Natural killer cell (primary cell): ENCODE measurements at regions of chr7 and their contacts with region 1.

Region 1: GRCh38 chr7:103148994-103149807 is at the start of gene NAPEPLD:
- DNase-seq: peak; percentile 69 to 86
- ATAC-seq: peak; percentile 87 to 93 (median 90)
- H3K4me3 ChIP-seq: peak within 1 kb of the TSS; percentile 99
- H3K4me3 Mint-ChIP-seq: peak within 1 kb of the TSS; percentile 93
- H3K27ac ChIP-seq: peak within 1 kb of the TSS; percentile 90
- H3K27ac Mint-ChIP-seq: peak within 1 kb of the TSS; percentile 85 to 94
- H3K4me1 ChIP-seq: peaks cover 12% of the 10 kb centered on the region
- H3K4me1 Mint-ChIP-seq: peaks cover 35 to 36% of the 10 kb centered on the region in 2 donors
- H3K27me3 ChIP-seq: no peaks in the 10 kb centered on the region
- H3K27me3 Mint-ChIP-seq: no peaks in the 10 kb centered on the region
- CTCF ChIP-seq: no peak
- total RNA-seq, gene NAPEPLD: 5.3 to 6.7 (median 5.9) TPM

Region 2: GRCh38 chr7:103025341-103025740 is 123.9 kb before region 1 on chr7:
- intact Hi-C with region 1: no loop called
- DNase-seq: no peak
- ATAC-seq: no peak
- H3K4me3 ChIP-seq: no peak overlapping the region
- H3K4me3 Mint-ChIP-seq: no peak overlapping the region
- H3K27ac ChIP-seq: no peak overlapping the region
- H3K27ac Mint-ChIP-seq: no peak overlapping the region
- H3K4me1 ChIP-seq: no peaks in the 10 kb centered on the region
- H3K4me1 Mint-ChIP-seq: no peaks in the 10 kb centered on the region
- H3K27me3 ChIP-seq: no peaks in the 10 kb centered on the region
- H3K27me3 Mint-ChIP-seq: peaks cover 0 to 7% of the 10 kb centered on the region in 2 donors
- CTCF ChIP-seq: no peak

Region 3: GRCh38 chr7:103074519-103075336 is 74.5 kb before region 1 on chr7 and contains the starts of genes ARMC10 and FBXL13:
- intact Hi-C with region 1: loop called (anchors 2 kb)
- DNase-seq: peak; percentile 83 to 95
- ATAC-seq: peak; percentile 83 to 92 (median 84)
- H3K4me3 ChIP-seq: peak within 1 kb of the TSS; percentile 50
- H3K4me3 Mint-ChIP-seq: peak within 1 kb of the TSS; percentile 95
- H3K27ac ChIP-seq: peak within 1 kb of the TSS; percentile 71
- H3K27ac Mint-ChIP-seq: peak within 1 kb of the TSS; percentile 78 to 89
- H3K4me1 ChIP-seq: peaks cover 13% of the 10 kb centered on the region
- H3K4me1 Mint-ChIP-seq: peaks cover 26 to 30% of the 10 kb centered on the region in 2 donors
- H3K27me3 ChIP-seq: no peaks in the 10 kb centered on the region
- H3K27me3 Mint-ChIP-seq: no peaks in the 10 kb centered on the region
- CTCF ChIP-seq: no peak
- total RNA-seq, gene ARMC10: 15.0 to 17.2 (median 15.4) TPM
- total RNA-seq, gene FBXL13: 0.70 to 0.89 (median 0.85) TPM

Region 4: DNA sequence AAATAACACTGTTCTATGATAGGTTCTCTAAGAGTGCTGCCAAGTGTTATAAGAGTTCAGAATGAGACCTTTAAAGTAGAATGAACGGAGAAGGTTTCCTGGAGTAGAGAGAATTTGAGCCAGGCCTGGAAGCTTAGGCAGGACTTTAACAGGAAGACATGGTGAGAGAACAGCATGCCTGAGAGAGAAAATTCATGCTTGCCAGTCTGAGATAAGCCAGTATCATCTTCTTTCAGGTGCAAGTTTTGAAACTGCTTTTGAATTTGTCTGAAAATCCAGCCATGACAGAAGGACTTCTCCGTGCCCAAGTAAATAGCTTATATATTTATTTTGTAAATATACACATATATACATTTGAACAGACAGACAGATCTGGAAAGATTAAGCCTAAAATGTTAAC is 52.2 kb before region 1 on chr7:
- intact Hi-C with region 1: no loop called
- DNase-seq: no peak
- ATAC-seq: no peak
- H3K4me3 ChIP-seq: no peak overlapping the region
- H3K4me3 Mint-ChIP-seq: no peak overlapping the region
- H3K27ac ChIP-seq: no peak overlapping the region
- H3K27ac Mint-ChIP-seq: no peak overlapping the region
- H3K4me1 ChIP-seq: no peaks in the 10 kb centered on the region
- H3K4me1 Mint-ChIP-seq: no peaks in the 10 kb centered on the region
- H3K27me3 ChIP-seq: no peaks in the 10 kb centered on the region
- H3K27me3 Mint-ChIP-seq: no peaks in the 10 kb centered on the region
- CTCF ChIP-seq: no peak

Region 5: DNA sequence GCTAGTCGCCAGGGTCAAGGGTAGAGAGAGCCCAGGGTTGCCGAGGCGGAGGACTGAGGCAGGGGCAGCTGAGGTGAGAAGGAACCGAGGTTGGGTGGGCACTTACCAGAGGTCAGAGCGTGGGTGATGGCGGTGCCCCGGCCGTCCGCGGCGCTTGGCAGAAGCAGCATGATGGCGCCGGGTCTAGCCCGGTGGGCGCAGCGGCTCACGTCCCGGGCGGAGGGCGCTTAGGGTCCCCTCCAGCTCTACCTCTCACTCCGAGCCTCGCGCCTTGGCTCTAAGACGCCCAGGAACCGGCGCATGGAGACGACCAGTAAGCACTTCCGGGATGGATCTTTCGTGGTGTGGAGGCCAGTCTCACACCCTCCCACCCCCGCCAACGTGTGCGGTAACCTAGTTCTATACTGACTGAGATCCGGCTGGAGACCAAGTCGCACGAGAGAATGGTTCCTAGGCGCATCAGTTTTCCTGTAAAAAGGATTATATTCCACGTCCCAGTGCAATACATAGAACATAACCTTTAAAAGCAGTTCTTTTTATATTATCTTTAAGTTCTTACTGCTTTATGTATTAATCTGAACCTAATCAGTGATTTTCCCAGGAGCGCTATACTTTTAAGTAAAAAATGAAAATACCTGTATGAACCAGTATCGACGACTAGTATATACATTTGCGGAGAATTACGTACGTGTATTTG is 195.4 kb after region 1 on chr7 and contains the start of gene DNAJC2:
- intact Hi-C with region 1: loop called (anchors 1 kb)
- DNase-seq: peak; percentile 76 to 95
- ATAC-seq: peak; percentile 87 to 95 (median 92)
- H3K4me3 ChIP-seq: peak within 1 kb of the TSS; percentile 83
- H3K4me3 Mint-ChIP-seq: peak within 1 kb of the TSS; percentile 99
- H3K27ac ChIP-seq: peak within 1 kb of the TSS; percentile 81
- H3K27ac Mint-ChIP-seq: peak within 1 kb of the TSS; percentile 94 to 96
- H3K4me1 ChIP-seq: peaks cover 17% of the 10 kb centered on the region
- H3K4me1 Mint-ChIP-seq: peaks cover 55% of the 10 kb centered on the region in 2 donors
- H3K27me3 ChIP-seq: no peaks in the 10 kb centered on the region
- H3K27me3 Mint-ChIP-seq: no peaks in the 10 kb centered on the region
- CTCF ChIP-seq: no peak
- total RNA-seq, gene DNAJC2: 56.8 to 74.2 (median 59.9) TPM